ENCODE measurements at regions of chr17 and their contacts with region 1.

Region 1: DNA sequence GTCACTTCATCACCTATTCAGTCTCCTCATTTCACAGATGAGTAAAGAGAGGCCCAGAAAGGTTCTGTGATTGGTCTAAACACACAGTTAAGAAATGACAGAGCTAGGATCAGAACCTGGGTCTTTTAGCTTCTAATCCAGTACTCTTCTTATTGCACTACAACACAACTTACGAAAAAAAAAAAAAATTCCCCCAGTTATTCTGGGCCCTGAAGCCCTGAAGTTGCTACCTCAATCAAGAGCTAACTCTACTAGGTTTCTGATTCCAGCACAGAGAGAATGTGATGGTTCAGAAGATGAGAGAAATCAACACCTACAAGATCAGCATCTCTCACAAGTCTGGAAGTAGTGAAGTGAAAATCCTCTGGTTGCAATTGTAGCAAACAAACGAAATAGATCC is 37.3 kb downstream of the GRB7 start:
- DNase-seq: no peak
- ATAC-seq: no peak
- H3K4me3 ChIP-seq: no peak overlapping the region
- H3K27ac ChIP-seq: no peak overlapping the region
- H3K4me1 ChIP-seq: peaks cover 11% of the 10 kb centered on the region
- H3K27me3 ChIP-seq: peaks cover 17% of the 10 kb centered on the region
- CTCF ChIP-seq: no peak

Region 2: GRCh38 chr17:39800540-39800939 is 25.5 kb after region 1 on chr17:
- CTCF ChIA-PET with region 1: no interaction called
- POLR2A ChIA-PET with region 1: no interaction called
- intact Hi-C with region 1: no loop called
- DNase-seq: no peak
- ATAC-seq: no peak
- H3K4me3 ChIP-seq: no peak overlapping the region
- H3K27ac ChIP-seq: no peak overlapping the region
- H3K4me1 ChIP-seq: no peaks in the 10 kb centered on the region
- H3K27me3 ChIP-seq: no peaks in the 10 kb centered on the region
- CTCF ChIP-seq: no peak

Region 3: DNA sequence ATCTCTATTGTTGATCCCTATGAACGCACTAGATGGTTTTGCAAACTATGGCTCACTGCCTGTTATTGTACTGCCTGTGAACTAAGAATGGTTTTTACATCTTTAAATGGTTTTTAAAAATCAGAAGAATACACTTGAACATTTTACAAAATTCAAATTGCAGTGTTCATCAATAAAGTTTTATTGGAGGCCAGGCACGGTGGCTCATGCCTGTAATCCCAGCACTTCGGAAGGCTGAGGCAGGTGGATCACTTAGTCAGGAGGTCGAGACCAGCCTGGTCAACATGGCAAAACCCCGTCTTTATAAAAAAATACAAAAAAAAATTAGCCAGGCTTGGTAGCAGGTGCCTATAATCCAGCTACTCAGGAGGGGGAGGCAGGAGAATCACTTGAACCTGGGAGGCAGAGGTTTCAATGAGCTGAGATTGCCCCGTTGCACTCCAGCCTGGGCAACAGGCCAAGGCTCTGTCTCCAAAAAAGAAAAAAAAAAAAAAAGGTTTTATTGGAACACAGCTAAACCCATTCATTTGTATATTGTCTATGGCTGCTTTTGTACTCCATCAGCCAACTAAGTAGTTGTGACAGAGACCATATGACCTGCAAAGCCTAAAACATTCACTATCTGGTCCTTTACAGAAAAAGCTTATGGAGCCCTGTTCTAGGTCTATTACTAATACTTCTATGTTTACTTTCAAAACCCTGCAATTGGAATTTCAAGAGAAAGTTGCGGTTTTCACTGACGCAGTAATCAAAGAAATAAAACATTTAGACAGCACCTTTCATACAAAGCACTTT is 70.2 kb after region 1 on chr17:
- CTCF ChIA-PET with region 1: no interaction called
- POLR2A ChIA-PET with region 1: no interaction called
- intact Hi-C with region 1: no loop called
- DNase-seq: no peak
- ATAC-seq: no peak
- H3K4me3 ChIP-seq: no peak overlapping the region
- H3K27ac ChIP-seq: no peak overlapping the region
- H3K4me1 ChIP-seq: no peaks in the 10 kb centered on the region
- H3K27me3 ChIP-seq: peaks cover 18% of the 10 kb centered on the region; the same call in 1 of the 2 replicates
- CTCF ChIP-seq: no peak

Region 4: DNA sequence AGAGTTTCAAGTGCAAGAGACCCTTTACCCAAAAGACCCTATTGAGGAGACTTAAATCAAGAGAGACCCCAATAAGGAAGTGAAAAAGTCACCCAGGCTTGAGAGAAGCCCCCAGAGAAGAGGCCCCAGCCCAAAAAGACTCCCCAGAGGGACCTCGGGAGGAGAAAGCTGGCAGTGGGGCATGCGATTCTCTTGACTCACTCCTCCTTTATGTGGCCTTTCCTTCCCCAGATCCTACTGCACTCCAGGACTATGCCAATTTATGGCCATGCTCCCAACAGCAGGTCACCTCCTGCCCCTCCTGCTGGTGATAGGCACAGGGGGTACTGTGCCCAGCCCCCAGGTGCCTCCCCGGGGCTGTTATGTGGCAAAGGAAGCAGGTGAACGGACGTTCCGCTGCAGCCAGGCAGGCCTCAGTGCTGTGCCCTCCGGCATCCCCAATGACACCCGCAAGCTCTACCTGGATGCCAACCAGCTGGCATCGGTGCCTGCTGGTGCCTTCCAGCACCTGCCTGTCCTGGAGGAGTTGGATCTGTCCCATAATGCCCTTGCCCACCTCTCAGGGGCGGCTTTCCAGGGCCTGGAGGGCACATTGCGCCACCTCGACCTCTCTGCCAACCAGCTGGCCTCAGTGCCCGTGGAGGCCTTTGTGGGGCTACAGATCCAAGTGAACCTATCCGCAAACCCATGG is 168.8 kb after region 1 on chr17:
- CTCF ChIA-PET with region 1: no interaction called
- POLR2A ChIA-PET with region 1: interaction called, 13 read pairs
- intact Hi-C with region 1: no loop called
- DNase-seq: no peak
- ATAC-seq: no peak
- H3K4me3 ChIP-seq: no peak overlapping the region
- H3K27ac ChIP-seq: no peak overlapping the region
- H3K4me1 ChIP-seq: 0 out of 2 replicates have a peak, but pooled peaks cover 8% of the 10 kb centered on the region
- H3K27me3 ChIP-seq: no peaks in the 10 kb centered on the region
- CTCF ChIP-seq: no peak